PC-9 (cell line): ENCODE measurements at regions of chr10 and their contacts with region 1.

Region 1: DNA sequence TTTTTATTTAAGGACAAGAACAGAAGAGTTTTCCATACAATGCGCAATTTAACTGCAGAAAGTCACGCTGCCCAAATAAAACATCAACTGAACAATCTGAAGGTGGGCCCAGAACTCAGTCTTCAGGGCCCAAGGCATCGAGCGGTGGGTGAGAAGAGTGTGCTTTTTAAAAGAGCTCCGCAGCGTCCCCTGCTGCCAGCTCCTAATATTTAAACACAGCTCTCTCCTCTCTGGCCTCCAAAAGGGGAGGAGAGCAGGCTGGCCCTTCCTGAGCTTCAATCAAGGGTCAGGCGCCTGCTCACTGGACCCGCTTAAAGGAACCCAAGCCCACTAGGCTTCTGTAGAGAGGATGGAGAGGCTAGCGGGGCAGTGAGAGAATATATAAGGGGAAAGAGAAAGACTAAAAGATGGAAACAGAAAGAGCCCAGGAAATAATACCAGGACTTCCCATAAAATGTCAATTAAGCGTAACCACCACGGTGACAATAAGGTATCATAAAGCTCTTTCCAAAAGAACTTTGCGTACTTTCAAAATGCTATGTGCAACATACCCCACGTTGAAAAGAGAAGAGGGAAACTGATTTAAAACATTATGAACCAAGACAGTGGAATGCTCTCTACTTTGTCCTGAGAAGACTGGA is 2.8 kb downstream of the FAM53B start:
- DNase-seq: peak; percentile 42 to 65
- H3K4me3 ChIP-seq: no peak overlapping the region
- H3K27ac ChIP-seq: no peak overlapping the region
- H3K4me1 ChIP-seq: peaks cover 40% of the 10 kb centered on the region
- H3K27me3 ChIP-seq: no peaks in the 10 kb centered on the region
- CTCF ChIP-seq: peak; percentile 78

Region 2: DNA sequence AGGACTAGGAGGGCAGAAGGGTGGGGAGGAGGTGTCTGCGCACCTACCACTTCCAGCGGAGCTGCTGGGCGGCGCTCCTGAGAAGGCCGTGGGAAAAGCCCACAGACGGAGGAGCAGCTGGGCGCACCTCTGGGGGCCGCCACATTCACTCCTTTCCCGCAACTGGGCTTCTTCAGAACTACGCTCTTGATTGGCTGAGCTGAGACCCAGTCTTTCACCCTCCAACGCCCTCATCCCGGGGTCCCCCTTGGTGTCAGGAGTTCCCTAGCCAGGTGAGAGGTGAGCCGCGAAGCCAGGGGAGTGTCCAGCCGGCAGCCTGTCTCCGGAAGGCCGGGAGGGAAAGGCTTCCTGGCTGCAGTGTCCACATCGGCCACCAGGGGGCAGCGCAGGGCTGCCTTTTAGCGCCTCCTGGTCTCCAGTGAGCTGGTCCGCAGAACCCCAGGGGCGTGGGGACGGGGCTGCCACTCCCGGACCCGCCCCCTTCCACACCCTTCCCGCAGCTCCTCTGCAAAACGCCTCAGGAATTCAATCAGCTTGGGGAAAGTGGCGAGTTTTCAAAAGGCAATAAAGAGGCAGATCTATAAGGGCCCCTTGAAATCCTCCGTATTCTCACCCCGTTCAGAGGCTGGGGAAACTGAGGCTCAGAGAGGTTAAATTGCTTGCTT is 746.9 kb before region 1 on chr10:
- CTCF ChIA-PET with region 1: no interaction called
- POLR2A ChIA-PET with region 1: no interaction called
- intact Hi-C with region 1: loop called (anchors 2 kb)
- DNase-seq: peak; percentile 70 to 90
- H3K4me3 ChIP-seq: peak overlapping the region; percentile 50; the same call in 1 of the 2 replicates
- H3K27ac ChIP-seq: peak overlapping the region; percentile 99
- H3K4me1 ChIP-seq: peaks cover 29% of the 10 kb centered on the region
- H3K27me3 ChIP-seq: no peaks in the 10 kb centered on the region
- CTCF ChIP-seq: peak; percentile 92

Region 3: GRCh38 chr10:124418726-124419501 is 322.5 kb before region 1 on chr10 and contains the start of gene OAT:
- CTCF ChIA-PET with region 1: interaction called, 3 read pairs
- POLR2A ChIA-PET with region 1: no interaction called
- intact Hi-C with region 1: loop called (anchors 10 kb)
- DNase-seq: peak; percentile 87 to 92
- H3K4me3 ChIP-seq: peak within 1 kb of the TSS; percentile 79
- H3K27ac ChIP-seq: peak within 1 kb of the TSS; percentile 56; the same call in 1 of the 2 replicates
- H3K4me1 ChIP-seq: peaks cover 18% of the 10 kb centered on the region; the same call in 1 of the 2 replicates
- H3K27me3 ChIP-seq: no peaks in the 10 kb centered on the region
- CTCF ChIP-seq: no peak; the same call in 1 of the 2 replicates
- total RNA-seq, gene OAT: 73.8 and 130 TPM in 2 replicates

Region 4: GRCh38 chr10:124539935-124540641 is 201.3 kb before region 1 on chr10:
- CTCF ChIA-PET with region 1: no interaction called
- POLR2A ChIA-PET with region 1: no interaction called
- intact Hi-C with region 1: loop called (anchors 2 kb)
- DNase-seq: peak in 1 of 2 experiments; percentile 28
- H3K4me3 ChIP-seq: no peak overlapping the region
- H3K27ac ChIP-seq: no peak overlapping the region
- H3K4me1 ChIP-seq: no peaks in the 10 kb centered on the region
- H3K27me3 ChIP-seq: no peaks in the 10 kb centered on the region
- CTCF ChIP-seq: peak; percentile 40

Region 5: DNA sequence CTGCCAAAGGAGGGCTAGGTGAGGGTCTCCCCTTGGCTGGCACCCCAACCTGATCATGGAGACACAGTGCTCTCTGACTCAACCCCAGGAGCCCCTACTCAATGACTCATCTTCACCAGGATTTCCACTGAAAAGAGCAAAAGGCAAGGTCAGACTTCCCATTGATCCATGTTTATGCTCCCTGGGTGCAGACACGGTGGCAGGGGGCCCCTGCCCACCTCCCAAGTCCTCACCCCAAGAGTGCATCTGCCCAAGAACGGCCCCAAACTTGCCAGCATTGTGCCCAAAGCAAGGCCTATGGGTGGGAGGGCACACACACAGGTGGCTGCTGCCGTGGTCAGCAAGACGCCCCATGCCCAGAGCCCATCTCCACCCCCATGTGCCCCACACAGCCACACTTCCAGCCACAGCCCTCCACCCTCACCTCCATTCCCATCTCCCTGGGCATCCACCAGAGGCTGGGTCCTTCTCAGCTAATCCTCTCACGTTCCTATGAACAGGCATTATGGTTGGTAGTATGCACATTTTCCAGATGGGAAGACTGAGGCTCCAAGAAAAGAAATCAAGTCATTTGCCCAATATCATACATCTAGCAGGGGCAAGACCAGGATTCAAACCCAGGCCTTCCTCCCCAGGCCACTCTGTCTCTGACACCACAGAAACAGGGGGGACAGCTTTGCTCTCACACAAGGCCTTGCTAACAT is 28.5 kb before region 1 on chr10:
- CTCF ChIA-PET with region 1: no interaction called
- POLR2A ChIA-PET with region 1: no interaction called
- intact Hi-C with region 1: no loop called
- DNase-seq: no peak
- H3K4me3 ChIP-seq: no peak overlapping the region
- H3K27ac ChIP-seq: no peak overlapping the region
- H3K4me1 ChIP-seq: no peaks in the 10 kb centered on the region
- H3K27me3 ChIP-seq: no peaks in the 10 kb centered on the region
- CTCF ChIP-seq: no peak

Region 6: DNA sequence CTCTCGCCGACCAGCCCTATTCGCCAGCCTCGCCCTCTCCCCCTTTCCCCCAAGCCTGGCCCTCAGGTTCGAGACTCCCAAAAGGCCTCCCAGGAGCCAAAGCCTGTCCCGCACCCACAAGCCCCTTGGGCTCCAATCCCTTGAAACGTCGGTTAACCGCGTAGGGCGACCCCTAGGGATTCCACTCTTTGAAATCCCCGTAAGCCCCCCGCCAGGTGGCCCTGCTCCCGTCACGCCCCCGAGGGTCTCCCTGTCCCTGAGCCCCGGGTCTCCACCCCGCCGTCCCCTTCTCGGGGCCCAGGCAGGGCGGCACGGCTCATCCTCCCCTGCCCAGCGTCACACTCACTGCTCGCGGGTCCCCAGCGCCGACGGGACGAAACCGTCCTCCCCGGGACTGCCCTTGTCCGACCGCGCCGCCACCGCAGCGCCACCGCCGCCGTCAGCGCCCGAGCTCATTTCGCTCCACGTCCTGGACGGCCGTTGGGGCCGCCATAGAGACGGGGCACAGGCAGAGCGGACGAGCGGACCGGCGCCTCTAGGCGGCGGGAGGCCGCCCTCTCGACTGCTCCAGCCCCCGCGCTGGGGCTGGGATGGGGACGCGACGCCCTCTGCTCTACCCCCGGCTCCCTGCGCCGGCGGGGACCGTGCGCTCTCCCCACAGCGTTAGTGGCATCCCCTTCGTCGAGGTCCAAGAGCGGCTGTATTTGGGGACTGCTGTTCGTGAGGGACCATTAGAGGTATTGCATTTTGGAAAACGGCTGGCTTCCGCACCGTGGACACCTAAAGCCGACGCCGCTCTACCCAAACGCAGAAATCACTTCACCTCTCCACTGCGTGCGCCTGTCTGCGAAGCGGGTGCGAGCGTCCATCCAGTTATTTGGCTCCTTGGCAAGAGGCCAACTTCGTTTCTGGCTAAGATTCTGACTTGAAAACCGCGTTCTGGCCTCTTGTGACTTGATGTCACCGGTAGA is 50.3 kb after region 1 on chr10 and contains the start of gene EEF1AKMT2:
- CTCF ChIA-PET with region 1: interaction called, 7 read pairs
- POLR2A ChIA-PET with region 1: interaction called, 5 read pairs
- intact Hi-C with region 1: loop called (anchors 5 kb)
- DNase-seq: peak; percentile 60 to 79
- H3K4me3 ChIP-seq: peak within 1 kb of the TSS; percentile 89
- H3K27ac ChIP-seq: peak within 1 kb of the TSS; percentile 47
- H3K4me1 ChIP-seq: peaks cover 6% of the 10 kb centered on the region; the same call in 1 of the 2 replicates
- H3K27me3 ChIP-seq: no peaks in the 10 kb centered on the region
- CTCF ChIP-seq: peak; percentile 39; the same call in 1 of the 2 replicates
- total RNA-seq, gene EEF1AKMT2: 16.4 and 18.4 TPM in 2 replicates

Region 7: GRCh38 chr10:124860426-124860825 is 119.0 kb after region 1 on chr10:
- CTCF ChIA-PET with region 1: no interaction called
- POLR2A ChIA-PET with region 1: no interaction called
- intact Hi-C with region 1: no loop called
- DNase-seq: no peak
- H3K4me3 ChIP-seq: no peak overlapping the region
- H3K27ac ChIP-seq: no peak overlapping the region
- H3K4me1 ChIP-seq: peaks cover 25% of the 10 kb centered on the region
- H3K27me3 ChIP-seq: no peaks in the 10 kb centered on the region
- CTCF ChIP-seq: no peak